ENCODE measurements at regions of chr17 and their contacts with region 1.

Region 1: GRCh38 chr17:44533533-44534246 is 23.6 kb upstream of the FZD2 start:
- DNase-seq: peak; percentile 94
- ATAC-seq: peak; percentile 90
- H3K4me3 ChIP-seq: no peak overlapping the region
- H3K27ac ChIP-seq: no peak overlapping the region
- H3K4me1 ChIP-seq: peaks cover 12% of the 10 kb centered on the region; the same call in 1 of the 2 replicates
- H3K27me3 ChIP-seq: no peaks in the 10 kb centered on the region
- CTCF ChIP-seq: peak; percentile 99

Region 2: DNA sequence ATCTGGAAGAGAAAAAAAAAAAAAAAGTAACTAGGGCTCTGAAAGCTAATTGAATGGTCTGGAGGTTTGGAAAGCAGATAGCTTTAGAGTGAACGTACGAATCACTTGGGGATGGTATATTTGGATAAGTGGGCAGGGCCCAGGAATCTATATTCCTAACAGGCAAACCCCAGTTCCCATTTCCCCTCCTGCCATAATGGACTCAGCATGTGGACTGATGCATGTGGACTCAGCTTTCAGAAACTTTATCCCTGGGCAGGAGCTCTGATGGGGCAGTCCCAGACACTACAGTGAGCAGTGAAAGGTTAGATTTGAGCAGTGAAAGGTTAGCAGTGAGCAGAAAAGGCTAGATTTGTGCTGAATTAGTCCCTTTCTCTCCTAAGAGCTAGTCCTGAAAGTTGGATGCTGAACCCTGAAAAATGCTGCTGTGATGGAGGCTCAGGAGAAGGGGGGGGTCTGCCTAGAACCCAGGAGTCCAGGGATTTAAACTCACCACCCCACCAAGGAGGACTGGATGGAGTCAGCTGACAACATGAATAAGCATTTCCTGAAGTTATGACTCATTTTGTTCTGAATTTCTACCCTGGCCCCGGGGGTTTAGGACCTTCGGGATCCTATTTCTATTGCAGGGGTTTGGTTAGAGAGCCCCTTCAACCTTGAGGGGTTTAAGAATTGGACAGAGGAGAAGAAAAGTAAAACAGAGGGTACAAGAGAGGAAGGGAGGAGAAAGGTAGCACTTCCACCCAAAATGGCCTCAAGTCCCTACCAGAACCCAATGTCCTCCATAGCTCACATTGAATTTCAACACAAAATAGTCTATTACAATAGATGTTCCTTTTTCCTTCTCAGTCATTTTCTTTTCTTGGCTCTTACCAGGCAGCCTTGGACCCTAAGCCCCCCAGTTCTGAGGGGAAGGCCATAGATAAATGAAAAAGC is 13.2 kb after region 1 on chr17:
- CTCF ChIA-PET with region 1: interaction called, 6 read pairs
- POLR2A ChIA-PET with region 1: interaction called, 15 read pairs
- intact Hi-C with region 1: no loop called
- DNase-seq: peak; percentile 64
- ATAC-seq: peak; percentile 51
- H3K4me3 ChIP-seq: no peak overlapping the region
- H3K27ac ChIP-seq: peak overlapping the region; percentile 54
- H3K4me1 ChIP-seq: peaks cover 47% of the 10 kb centered on the region
- H3K27me3 ChIP-seq: no peaks in the 10 kb centered on the region
- CTCF ChIP-seq: no peak

Region 3: DNA sequence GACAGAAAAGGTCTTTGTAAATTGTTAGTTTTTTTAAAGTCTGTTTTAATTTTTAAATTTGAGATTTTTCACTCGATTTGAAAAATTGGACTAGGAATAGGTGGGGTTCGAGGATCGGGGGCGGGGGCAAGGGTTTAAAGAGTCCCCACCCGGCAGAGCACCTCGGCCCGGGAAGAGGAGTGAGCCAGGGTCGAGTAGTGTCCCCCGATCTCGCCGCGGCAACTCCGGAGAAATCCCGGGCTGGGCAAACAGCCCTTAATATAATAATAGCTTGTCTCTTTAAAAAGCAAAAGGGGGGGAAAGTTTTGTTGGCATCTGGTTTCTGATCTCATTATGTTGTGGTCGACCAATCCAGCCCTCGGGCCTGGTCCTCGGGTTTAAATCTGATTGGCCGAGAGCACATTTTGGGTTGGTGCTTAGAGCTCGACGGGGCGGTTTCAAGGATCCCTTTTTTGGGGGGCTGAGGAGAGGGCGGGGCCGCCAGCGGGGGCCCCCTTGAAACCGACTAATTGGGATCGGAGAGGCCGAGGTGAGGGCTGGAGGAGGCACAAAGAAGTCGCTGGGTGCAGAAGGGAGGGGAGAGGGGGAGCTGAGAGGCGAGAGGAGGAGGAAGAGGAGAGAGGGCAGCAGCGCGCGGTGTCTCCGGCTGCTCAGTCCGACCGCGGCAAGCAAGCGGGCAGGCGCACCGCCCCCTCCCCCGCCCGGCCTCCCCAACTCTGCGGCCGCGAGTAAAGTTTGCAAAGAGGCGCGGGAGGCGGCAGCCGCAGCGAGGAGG is 23.3 kb after region 1 on chr17 and contains the start of gene FZD2:
- CTCF ChIA-PET with region 1: interaction called, 5 read pairs
- POLR2A ChIA-PET with region 1: no interaction called
- intact Hi-C with region 1: loop called (anchors 2 kb)
- DNase-seq: peak; percentile 98
- ATAC-seq: peak; percentile 90
- H3K4me3 ChIP-seq: peak within 1 kb of the TSS; percentile 84
- H3K27ac ChIP-seq: no peak within 1 kb of the TSS
- H3K4me1 ChIP-seq: peaks cover 23% of the 10 kb centered on the region
- H3K27me3 ChIP-seq: no peaks in the 10 kb centered on the region
- CTCF ChIP-seq: no peak
- total RNA-seq, gene FZD2: 11.6 and 12.8 TPM in 2 replicates

Region 4: GRCh38 chr17:44636562-44636961 is 102.9 kb after region 1 on chr17:
- CTCF ChIA-PET with region 1: interaction called, 10 read pairs
- POLR2A ChIA-PET with region 1: no interaction called
- intact Hi-C with region 1: loop called (anchors 1 kb)
- DNase-seq: peak; percentile 68
- ATAC-seq: peak; percentile 80
- H3K4me3 ChIP-seq: no peak overlapping the region
- H3K27ac ChIP-seq: no peak overlapping the region
- H3K4me1 ChIP-seq: no peaks in the 10 kb centered on the region
- H3K27me3 ChIP-seq: no peaks in the 10 kb centered on the region
- CTCF ChIP-seq: peak; percentile 74

Region 5: GRCh38 chr17:44672479-44673093 is 138.9 kb after region 1 on chr17:
- CTCF ChIA-PET with region 1: interaction called, 7 read pairs
- POLR2A ChIA-PET with region 1: no interaction called
- intact Hi-C with region 1: loop called (anchors 1 kb)
- DNase-seq: peak; percentile 63
- ATAC-seq: peak; percentile 51; the same call in 1 of the 2 replicates
- H3K4me3 ChIP-seq: no peak overlapping the region
- H3K27ac ChIP-seq: no peak overlapping the region
- H3K4me1 ChIP-seq: 0 out of 2 replicates have a peak, but pooled peaks cover 2% of the 10 kb centered on the region
- H3K27me3 ChIP-seq: no peaks in the 10 kb centered on the region
- CTCF ChIP-seq: peak; percentile 94

Region 6: DNA sequence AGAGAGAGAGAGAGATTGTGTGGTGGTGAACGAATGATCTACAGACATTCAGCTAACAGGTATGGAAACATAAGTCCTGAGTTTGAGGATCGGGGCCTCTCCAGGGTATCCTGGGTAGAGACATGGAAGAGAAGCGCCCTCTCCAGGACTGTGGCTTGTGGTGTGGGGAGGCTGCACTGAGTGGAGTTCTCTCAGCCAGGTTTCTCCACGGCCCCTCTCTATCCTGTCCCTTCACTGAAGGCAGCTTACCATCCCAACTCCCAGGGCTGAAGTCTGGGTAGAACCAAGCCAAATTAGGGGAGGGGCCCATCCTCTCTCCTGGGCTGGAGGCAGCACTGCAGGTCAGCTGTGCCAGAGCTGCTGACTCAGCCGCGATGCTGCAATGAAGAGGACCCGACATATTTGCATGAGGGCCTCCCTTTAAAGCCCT is 428.2 kb after region 1 on chr17:
- CTCF ChIA-PET with region 1: no interaction called
- POLR2A ChIA-PET with region 1: no interaction called
- intact Hi-C with region 1: no loop called
- DNase-seq: peak; percentile 29
- ATAC-seq: peak; percentile 65
- H3K4me3 ChIP-seq: no peak overlapping the region
- H3K27ac ChIP-seq: no peak overlapping the region
- H3K4me1 ChIP-seq: peaks cover 5% of the 10 kb centered on the region; the same call in 1 of the 2 replicates
- H3K27me3 ChIP-seq: peaks cover 8% of the 10 kb centered on the region
- CTCF ChIP-seq: peak; percentile 40